Aorta (tissue), 5 donors: ENCODE measurements at regions of chr14 and their contacts with region 1.

Region 1: GRCh38 chr14:64704143-64704742 is at the start of gene PLEKHG3:
- DNase-seq: peak; percentile 87 to 95
- ATAC-seq: peak; percentile 81
- H3K4me3 ChIP-seq: peak within 1 kb of the TSS; percentile 70 to 87
- H3K27ac ChIP-seq: peak within 1 kb of the TSS; percentile 62 to 86
- H3K4me1 ChIP-seq: no peaks in the 10 kb centered on the region
- H3K27me3 ChIP-seq: no peaks in the 10 kb centered on the region
- total RNA-seq, gene PLEKHG3: 46.5 to 82.9 TPM

Region 2: GRCh38 chr14:64671591-64671990 is 32.7 kb before region 1 on chr14:
- intact Hi-C with region 1: loop called in 1 of 2 experiments (anchors 5 kb)
- DNase-seq: no peak
- ATAC-seq: peak; percentile 84
- H3K4me3 ChIP-seq: no peak overlapping the region
- H3K27ac ChIP-seq: no peak overlapping the region
- H3K4me1 ChIP-seq: no peaks in the 10 kb centered on the region
- H3K27me3 ChIP-seq: no peaks in the 10 kb centered on the region

Region 3: GRCh38 chr14:64681796-64682710 is 22.2 kb before region 1 on chr14:
- intact Hi-C with region 1: loop called in 1 of 2 experiments (anchors 2 kb)
- DNase-seq: peak; percentile 92 to 94
- ATAC-seq: peak; percentile 93
- H3K4me3 ChIP-seq: no peak overlapping the region
- H3K27ac ChIP-seq: peak overlapping the region; percentile 71 to 96
- H3K4me1 ChIP-seq: no peaks in the 10 kb centered on the region
- H3K27me3 ChIP-seq: no peaks in the 10 kb centered on the region

Region 4: DNA sequence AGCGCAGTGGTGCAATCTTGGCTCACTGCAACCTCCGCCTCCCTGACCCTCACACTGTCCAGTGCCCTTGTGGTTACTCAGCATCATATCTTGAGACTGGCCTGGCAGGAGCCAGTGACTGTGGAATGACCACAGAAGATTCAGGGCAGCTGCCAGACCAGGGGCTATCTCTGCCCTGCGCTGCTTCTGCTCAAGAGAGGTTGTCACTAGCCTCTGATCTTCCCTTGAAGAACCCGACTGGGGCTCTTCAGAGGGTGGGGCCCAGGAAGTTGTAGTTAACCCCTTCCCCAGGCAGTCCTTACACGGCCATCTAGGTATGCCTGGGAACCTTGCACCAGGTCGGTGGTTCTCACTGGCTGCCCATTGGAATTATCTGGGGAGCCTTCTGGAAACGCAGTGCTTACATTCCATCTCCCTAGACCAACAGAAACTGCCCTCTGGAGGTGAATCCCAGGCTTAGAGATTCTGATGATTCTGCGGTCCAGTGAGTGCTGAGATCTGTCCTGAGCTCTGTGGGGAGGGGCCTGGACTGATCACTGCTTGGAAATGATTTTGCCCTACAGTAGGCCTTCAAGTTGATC is 41.4 kb after region 1 on chr14:
- intact Hi-C with region 1: loop called in 1 of 2 experiments (anchors 5 kb)
- DNase-seq: peak in 1 of 2 donors; percentile 70
- ATAC-seq: peak; percentile 23
- H3K4me3 ChIP-seq: no peak overlapping the region
- H3K27ac ChIP-seq: peak overlapping the region in 1 of 2 donors; percentile 50
- H3K4me1 ChIP-seq: no peaks in the 10 kb centered on the region
- H3K27me3 ChIP-seq: no peaks in the 10 kb centered on the region

Region 5: DNA sequence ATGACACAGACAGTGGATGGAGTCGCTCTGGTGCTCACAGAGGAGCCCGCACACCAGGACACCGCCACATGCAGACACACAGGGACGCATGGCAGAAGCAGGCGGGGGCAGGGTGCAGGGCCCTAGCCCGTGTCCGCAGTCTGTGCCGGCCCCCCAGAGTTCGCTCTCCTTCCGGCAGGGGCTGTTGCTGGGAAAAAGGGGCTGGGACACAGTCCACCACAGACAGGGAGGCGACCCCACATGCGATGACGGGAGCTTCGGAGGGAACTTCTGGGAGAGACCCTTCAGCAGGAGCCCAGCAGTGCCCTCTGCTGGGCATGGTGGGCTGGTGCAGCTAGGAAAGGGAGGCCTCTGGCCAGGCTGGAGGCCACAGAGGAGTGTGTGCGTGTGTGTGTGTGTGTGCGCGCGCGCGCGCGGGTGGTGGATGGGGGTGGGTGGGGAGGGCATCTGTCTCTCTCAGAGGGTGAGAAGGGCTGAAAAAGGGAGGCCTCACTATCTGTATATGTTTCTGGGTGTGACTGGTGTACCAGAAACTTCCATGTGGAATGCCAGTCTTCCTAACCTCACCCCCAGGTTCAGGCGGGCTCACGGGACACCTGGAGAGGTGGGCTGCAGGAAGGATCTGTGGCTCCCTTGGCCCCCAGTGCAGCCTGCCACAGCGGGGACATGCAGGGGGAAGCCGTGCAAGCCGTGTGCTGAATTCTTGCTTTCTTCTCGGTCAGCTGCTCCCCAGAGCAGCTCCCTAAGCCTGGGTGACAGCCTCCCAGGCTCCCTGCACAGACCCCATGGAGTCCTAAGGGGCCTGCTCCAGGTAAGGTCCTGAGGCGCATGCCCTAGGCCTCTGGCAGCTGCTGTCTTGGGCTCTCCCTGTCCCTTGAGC is 60.6 kb after region 1 on chr14:
- intact Hi-C with region 1: loop called in 1 of 2 experiments (anchors 5 kb)
- DNase-seq: peak; percentile 83 to 91
- ATAC-seq: peak; percentile 90
- H3K4me3 ChIP-seq: no peak overlapping the region
- H3K27ac ChIP-seq: no peak overlapping the region
- H3K4me1 ChIP-seq: no peaks in the 10 kb centered on the region
- H3K27me3 ChIP-seq: no peaks in the 10 kb centered on the region